RWPE1 (cell line): ENCODE measurements at regions of chr3 and their contacts with region 1.

Region 1: DNA sequence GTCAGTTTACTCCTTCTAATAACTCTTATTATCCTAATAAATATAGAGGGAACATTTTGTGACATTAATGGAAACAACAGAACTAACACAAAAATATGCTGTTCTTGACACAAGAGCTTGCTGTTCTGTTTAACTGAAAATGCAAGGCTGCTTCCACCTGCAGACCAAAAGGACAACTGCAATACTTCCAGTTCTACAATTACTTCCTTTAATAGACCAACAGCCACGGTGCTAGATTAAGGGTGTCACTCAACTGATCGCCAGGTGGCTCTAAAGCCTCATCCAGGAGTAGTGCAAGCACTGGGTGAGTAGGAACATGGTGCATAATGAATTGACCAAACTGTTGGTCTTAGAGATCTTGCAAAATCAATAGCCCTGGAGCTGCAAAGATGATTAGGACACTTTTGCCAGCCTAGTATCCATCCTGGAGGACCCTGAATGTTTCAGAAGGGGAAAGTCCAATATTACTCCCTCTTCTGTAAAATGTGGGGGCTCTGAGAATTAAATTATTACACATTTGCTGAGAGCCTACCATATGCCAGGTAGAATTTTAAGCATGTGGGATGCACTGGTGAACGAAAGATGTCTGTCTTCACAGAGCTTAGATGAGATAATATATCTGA is 3.6 kb upstream of the CLDN16 start:
- DNase-seq: peak; percentile 67
- H3K27ac ChIP-seq: no peak overlapping the region
- CTCF ChIP-seq: peak; percentile 60

Region 2: GRCh38 chr3:190224863-190225692 is 159.3 kb before region 1 on chr3:
- CTCF ChIA-PET with region 1: interaction called, 23 read pairs
- POLR2A ChIA-PET with region 1: no interaction called
- DNase-seq: peak; percentile 31
- H3K27ac ChIP-seq: no peak overlapping the region
- CTCF ChIP-seq: peak; percentile 58